Motor neuron (in vitro differentiated cells): ENCODE measurements at regions of chr10 and their contacts with region 1.

Region 1: DNA sequence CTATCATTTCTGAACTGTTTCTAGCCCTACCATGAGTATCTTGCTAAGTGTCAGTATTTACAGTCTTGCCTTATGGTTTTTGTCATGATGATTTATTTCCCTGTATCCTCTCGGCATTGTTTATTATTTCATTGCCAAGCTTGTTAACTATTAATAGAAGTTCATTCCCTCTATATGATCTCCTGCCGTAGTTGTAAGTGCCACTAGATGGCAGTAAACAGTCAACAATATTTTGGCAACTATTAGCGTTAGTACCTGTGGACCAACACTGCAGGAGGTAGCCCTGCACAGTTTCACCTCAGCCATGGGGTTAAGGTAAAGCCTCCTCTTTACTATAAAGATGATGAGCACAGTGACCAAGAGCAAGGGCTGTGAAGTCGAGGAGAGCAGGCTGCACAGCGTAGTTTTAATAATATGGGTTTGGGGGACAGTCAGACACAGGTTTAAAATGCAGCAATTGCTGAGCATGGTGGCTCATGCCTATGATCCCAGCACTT is 26.1 kb upstream of the CCNJ start:
- ATAC-seq: peak; percentile 66 to 99 (median 87)
- H3K4me3 ChIP-seq: no peak overlapping the region
- H3K27ac ChIP-seq: no peak overlapping the region
- H3K4me1 ChIP-seq: no peaks in the 10 kb centered on the region

Region 2: GRCh38 chr10:95796504-95796903 is 220.7 kb before region 1 on chr10:
- in situ Hi-C with region 1: no loop called
- ATAC-seq: no peak
- H3K4me3 ChIP-seq: no peak overlapping the region
- H3K27ac ChIP-seq: no peak overlapping the region
- H3K4me1 ChIP-seq: no peaks in the 10 kb centered on the region

Region 3: GRCh38 chr10:96292971-96293920 is 276.0 kb after region 1 on chr10:
- in situ Hi-C with region 1: loop called in 2 of 9 experiments (anchors 25 kb)
- ATAC-seq: peak; percentile 64 to 99 (median 81)
- H3K4me3 ChIP-seq: no peak overlapping the region
- H3K27ac ChIP-seq: no peak overlapping the region
- H3K4me1 ChIP-seq: no peaks in the 10 kb centered on the region

Region 4: GRCh38 chr10:96339957-96340904 is 323.0 kb after region 1 on chr10:
- in situ Hi-C with region 1: loop called in 2 of 9 experiments (anchors 25 kb)
- ATAC-seq: peak; percentile 74 to 97 (median 88)
- H3K4me3 ChIP-seq: no peak overlapping the region
- H3K27ac ChIP-seq: no peak overlapping the region
- H3K4me1 ChIP-seq: peaks cover 0 to 3% of the 10 kb centered on the region in 2 donors